ENCODE measurements at regions of chr2 and their contacts with region 1.

Region 1: DNA sequence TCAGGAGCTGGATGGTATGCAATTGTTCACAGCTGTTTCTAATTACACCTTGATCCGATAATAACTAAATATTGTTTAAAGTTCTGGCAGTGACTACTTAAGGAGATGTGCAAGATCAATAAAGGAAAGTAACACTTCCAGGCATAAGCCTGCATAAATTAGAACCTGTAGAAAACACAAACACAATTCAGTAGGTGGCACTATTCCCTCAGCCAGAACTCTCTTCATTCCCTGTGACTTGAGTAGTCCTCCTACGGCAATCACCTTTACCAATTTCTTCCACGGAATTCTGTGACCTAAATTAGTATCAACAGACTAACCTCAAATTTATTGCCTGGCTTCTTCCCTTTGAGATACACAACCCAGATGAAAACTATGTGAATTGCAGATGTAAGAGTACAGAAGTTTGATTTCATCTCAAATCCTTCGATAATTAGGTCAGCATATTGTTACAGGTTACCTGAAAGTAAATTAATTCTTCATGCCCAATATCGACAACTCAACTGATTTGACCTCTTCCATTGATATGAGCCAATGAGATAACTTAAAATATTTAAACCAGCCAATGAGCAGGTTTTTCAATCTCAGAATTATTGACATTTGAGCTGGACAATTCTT is 137.8 kb downstream of the PID1 start:
- ATAC-seq: peak; percentile 47 to 88 (median 64)
- H3K4me3 ChIP-seq: no peak overlapping the region
- H3K27ac ChIP-seq: no peak overlapping the region
- H3K4me1 ChIP-seq: peaks cover 10 to 29% of the 10 kb centered on the region in 2 donors

Region 2: GRCh38 chr2:228377533-228377932 is 755.7 kb before region 1 on chr2:
- in situ Hi-C with region 1: no loop called
- ATAC-seq: peak in 1 of 8 experiments; percentile 16
- H3K4me3 ChIP-seq: no peak overlapping the region
- H3K27ac ChIP-seq: no peak overlapping the region
- H3K4me1 ChIP-seq: no peaks in the 10 kb centered on the region

Region 3: DNA sequence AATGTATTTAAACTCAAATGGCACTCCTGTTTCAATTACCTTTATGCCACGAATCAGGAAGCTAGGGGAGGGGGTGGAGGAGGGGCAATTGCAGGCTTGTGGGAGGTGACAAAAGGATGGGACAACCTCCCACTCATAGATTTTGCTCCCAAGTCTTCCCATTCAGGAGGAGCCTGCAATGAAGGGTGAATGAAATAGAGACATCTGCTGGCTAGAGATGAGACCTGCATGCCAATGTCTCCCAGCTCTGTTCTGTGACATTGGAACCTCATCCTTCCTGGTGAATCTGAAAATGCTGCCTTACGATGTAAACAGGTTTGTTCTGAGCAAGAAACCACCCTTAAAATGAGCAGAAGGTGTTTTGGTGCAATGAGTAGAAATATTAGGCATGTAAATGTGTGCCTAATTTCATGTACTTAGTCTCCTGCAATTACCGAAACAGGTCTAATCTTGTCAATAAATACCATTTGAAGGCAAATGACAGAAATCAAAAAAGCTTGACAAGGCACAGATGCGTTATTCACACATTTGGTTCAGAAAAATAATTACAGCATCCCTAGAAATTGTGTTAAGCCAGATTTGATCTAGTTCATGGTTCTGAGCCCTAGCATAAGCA is 140.6 kb after region 1 on chr2:
- in situ Hi-C with region 1: loop called in 1 of 9 experiments (anchors 10 kb)
- ATAC-seq: peak; percentile 77 to 90 (median 81)
- H3K4me3 ChIP-seq: peak overlapping the region in 3 of 5 donors; percentile 11 to 19 (median 19)
- H3K27ac ChIP-seq: no peak overlapping the region
- H3K4me1 ChIP-seq: peaks cover 3 to 16% of the 10 kb centered on the region in 2 donors

Region 4: DNA sequence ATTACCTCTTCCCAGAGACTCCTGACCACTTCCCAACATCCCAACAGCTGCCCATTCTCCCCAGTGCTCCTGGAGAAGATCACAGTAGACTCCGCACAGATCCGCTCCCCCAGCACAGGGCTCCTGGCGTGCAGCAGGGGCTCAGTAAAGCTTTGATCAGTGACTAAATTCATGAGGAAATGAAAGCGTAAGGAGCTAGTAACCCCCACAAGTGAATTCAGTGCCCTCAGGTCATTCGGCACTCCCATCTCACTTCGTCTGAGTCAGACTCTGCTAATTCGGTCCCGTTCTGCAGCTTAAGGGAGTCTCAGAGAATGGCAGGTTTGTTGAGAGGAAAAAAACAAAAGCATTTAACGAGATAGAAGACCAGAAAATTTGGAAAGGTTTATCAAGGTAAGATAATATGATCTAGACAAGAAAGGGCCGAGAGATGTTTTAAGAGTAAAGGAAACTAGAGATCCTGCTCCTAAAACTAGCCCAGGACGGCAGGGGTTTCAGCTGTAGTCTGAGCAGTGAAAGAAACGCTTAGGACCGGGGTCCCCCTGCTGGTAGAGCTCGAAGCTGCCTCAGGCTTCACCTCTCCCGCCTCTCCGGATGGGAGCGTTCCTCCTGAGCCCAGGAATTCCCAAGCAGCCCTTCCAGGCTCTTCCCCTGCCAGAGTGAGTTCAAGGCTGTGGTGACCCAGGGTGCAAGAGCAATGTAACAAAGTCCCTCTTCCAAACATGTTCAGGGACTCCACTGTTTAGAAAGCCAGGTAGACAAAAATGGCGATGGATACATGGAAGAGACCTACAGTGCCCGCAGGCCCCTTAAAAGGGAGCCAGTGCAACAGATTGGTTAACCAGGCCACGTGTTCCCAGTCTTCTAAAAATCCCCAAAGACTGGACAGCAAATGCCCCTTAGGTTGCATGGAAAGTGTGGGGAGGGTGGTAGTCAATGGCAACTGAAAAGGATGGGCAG is 453.8 kb after region 1 on chr2:
- in situ Hi-C with region 1: loop called in 1 of 9 experiments (anchors 25 kb)
- ATAC-seq: peak; percentile 92 to 99 (median 96)
- H3K4me3 ChIP-seq: peak overlapping the region in 1 of 5 donors; percentile 7
- H3K27ac ChIP-seq: no peak overlapping the region
- H3K4me1 ChIP-seq: peaks cover 13% of the 10 kb centered on the region in 2 donors

Measured in motor neuron (in vitro differentiated cells).